ENCODE measurements at regions of chr10 and their contacts with region 1.

Region 1: DNA sequence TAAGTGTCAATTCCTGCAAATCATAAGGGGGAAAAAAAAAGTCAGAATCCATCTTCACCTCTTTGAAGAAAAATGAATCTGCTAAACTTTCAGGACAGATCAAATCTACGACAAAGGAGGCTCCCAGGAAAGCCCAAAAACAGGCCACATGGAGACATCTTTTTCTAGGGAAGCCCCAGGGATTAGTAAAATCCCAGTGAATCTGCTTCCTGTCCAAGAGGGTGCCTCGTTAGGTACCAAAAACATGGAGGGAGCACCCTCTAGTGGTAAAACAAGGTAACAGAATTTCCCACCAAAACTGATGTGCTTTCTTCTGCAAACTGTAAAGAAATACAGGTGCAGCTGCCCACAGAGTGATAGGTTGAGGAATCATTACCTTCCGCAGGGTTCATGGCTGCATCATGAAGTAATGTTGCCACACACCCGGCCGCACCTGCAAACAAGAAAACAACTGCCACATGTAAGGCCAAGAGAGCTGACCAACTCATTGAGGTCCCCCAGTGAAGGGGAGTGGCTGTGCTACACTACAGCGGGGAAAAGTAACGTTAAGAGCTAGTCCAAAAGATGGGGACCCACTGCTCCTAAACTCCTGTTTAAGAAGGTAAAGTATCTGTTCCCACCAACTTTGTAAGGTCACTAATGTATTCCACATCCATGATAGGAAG is 7.9 kb downstream of the SLC25A28 start:
- DNase-seq: peak; percentile 84
- H3K4me3 Mint-ChIP-seq: no peak overlapping the region
- H3K27ac Mint-ChIP-seq: peak overlapping the region; percentile 43
- H3K4me1 Mint-ChIP-seq: peaks cover 29% of the 10 kb centered on the region
- H3K27me3 Mint-ChIP-seq: no peaks in the 10 kb centered on the region

Region 2: DNA sequence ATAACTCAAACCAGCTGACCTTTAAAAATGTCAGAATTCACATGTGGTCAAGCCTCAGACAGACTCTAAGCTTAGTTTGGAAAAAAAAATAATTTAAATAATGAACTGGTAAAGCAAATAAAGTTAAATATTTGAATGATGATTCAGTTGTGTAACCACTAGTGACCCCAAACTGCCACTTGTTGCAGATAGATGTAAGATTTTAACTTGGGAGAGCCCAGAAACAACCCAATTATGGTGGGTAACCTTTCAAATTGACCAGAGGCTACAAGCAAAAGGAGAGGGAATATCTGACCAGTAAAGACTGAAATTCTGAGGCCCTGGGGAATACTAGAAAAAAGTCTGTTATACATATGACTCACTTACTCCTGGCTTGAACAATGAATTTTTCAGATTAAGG is 644.7 kb before region 1 on chr10:
- intact Hi-C with region 1: no loop called
- DNase-seq: no peak
- H3K4me3 Mint-ChIP-seq: no peak overlapping the region
- H3K27ac Mint-ChIP-seq: no peak overlapping the region
- H3K4me1 Mint-ChIP-seq: no peaks in the 10 kb centered on the region
- H3K27me3 Mint-ChIP-seq: no peaks in the 10 kb centered on the region

Region 3: GRCh38 chr10:99395750-99396445 is 216.4 kb before region 1 on chr10:
- intact Hi-C with region 1: loop called (anchors 1 kb)
- DNase-seq: no peak
- H3K4me3 Mint-ChIP-seq: no peak overlapping the region
- H3K27ac Mint-ChIP-seq: peak overlapping the region; percentile 20
- H3K4me1 Mint-ChIP-seq: peaks cover 8% of the 10 kb centered on the region
- H3K27me3 Mint-ChIP-seq: peaks cover 2% of the 10 kb centered on the region

Region 4: GRCh38 chr10:99435986-99436638 is 176.2 kb before region 1 on chr10:
- intact Hi-C with region 1: loop called (anchors 2 kb)
- DNase-seq: no peak
- H3K4me3 Mint-ChIP-seq: no peak overlapping the region
- H3K27ac Mint-ChIP-seq: no peak overlapping the region
- H3K4me1 Mint-ChIP-seq: peaks cover 18% of the 10 kb centered on the region
- H3K27me3 Mint-ChIP-seq: no peaks in the 10 kb centered on the region

Region 5: GRCh38 chr10:99560277-99561126 is 51.8 kb before region 1 on chr10:
- intact Hi-C with region 1: loop called (anchors 1 kb)
- DNase-seq: peak; percentile 82
- H3K4me3 Mint-ChIP-seq: no peak overlapping the region
- H3K27ac Mint-ChIP-seq: no peak overlapping the region
- H3K4me1 Mint-ChIP-seq: peaks cover 7% of the 10 kb centered on the region
- H3K27me3 Mint-ChIP-seq: peaks cover 26% of the 10 kb centered on the region

Measured in activated CD4-positive, alpha-beta T cell treated with anti-CD3 and anti-CD28 coated beads, Interleukin-2, amount 10 ng/mL, durations not matched to agents 24 days and 14 days (primary cell).